Dorsolateral prefrontal cortex (tissue), 120 donors: ENCODE measurements at regions of chr5 and their contacts with region 1.

Region 1: GRCh38 chr5:172283020-172283861 is at the start of gene UBTD2:
- DNase-seq: peak; percentile 28 to 84 (median 66)
- H3K4me3 ChIP-seq: peak within 1 kb of the TSS; percentile 60 to 96 (median 88)
- H3K27ac ChIP-seq: peak within 1 kb of the TSS in 56 of 59 donors; percentile 32 to 91 (median 76)
- H3K27me3 ChIP-seq: no peaks in the 10 kb centered on the region
- CTCF ChIP-seq: peak in 50 of 56 donors; percentile 2 to 72 (median 46)
- total RNA-seq, gene UBTD2: 7.7 to 14.5 (median 9.9) TPM

Region 2: GRCh38 chr5:171387345-171387969 is 895.8 kb before region 1 on chr5 and contains the start of gene NPM1:
- intact Hi-C with region 1: loop called in 1 of 2 experiments (anchors 10 kb)
- DNase-seq: peak; percentile 88 to 98 (median 94)
- H3K4me3 ChIP-seq: peak within 1 kb of the TSS; percentile 71 to 99 (median 93)
- H3K27ac ChIP-seq: peak within 1 kb of the TSS; percentile 52 to 96 (median 87)
- H3K27me3 ChIP-seq: no peaks in the 10 kb centered on the region
- CTCF ChIP-seq: peak in 8 of 56 donors; percentile 10 to 24 (median 16)
- total RNA-seq, gene NPM1: 162 to 384 (median 296) TPM

Region 3: DNA sequence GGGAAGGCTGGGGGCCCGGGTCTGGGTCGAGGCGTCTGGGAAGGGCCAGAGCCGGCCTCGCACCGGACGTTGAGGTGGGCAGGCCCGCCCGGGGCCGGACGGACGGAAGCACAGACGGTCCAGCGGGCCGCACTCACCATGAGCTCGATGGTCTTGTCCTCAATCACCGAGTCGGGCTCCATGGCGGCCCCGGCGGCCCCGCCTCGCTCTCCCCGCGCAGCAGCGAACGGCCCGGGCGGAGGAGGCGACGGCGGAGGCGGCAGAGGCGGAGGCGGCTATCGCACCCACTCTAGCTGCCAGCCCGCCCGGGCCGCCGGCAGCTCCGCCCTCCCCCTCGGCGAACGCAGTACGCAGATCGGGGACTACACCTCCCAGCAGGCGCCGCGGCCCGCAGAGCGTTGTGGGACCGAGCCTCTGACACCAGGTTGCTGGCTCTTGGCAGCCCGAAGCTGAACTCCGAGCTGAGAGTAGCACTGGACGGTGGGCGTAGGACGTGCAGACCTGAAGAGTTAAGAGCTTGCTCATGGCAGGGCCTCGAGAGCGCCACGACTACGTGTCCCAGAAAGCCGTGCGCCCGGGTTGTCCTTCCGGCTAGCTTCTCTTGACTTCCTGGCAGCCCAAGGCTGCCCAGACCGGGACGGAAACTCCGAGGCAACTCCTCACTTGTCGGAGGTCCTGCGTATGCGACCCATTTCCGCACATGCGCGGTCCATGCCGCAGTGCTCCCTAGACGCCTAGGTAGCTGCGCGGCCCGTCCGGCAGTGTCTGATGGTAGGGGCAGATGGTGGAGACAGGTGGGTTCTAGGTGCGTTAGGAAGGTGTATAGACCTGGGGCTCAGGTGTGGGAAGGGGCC is 276.7 kb before region 1 on chr5 and contains the start of gene FBXW11:
- intact Hi-C with region 1: loop called (anchors 5 kb)
- DNase-seq: peak; percentile 95 to 98 (median 98)
- H3K4me3 ChIP-seq: peak within 1 kb of the TSS; percentile 72 to 100 (median 96)
- H3K27ac ChIP-seq: peak within 1 kb of the TSS; percentile 89 to 100 (median 98)
- H3K27me3 ChIP-seq: no peaks in the 10 kb centered on the region
- CTCF ChIP-seq: peak in 21 of 56 donors; percentile 5 to 53 (median 25)
- total RNA-seq, gene FBXW11: 88.4 to 136 (median 113) TPM

Region 4: GRCh38 chr5:172188033-172188892 is 95.0 kb before region 1 on chr5 and contains the start of gene STK10:
- intact Hi-C with region 1: loop called (anchors 2 kb)
- DNase-seq: peak; percentile 78 to 94 (median 86)
- H3K4me3 ChIP-seq: peak within 1 kb of the TSS; percentile 68 to 98 (median 91)
- H3K27ac ChIP-seq: peak within 1 kb of the TSS; percentile 29 to 94 (median 85)
- H3K27me3 ChIP-seq: no peaks in the 10 kb centered on the region
- CTCF ChIP-seq: peak; percentile 44 to 97 (median 89)
- total RNA-seq, gene STK10: 4.5 to 28.7 (median 16.7) TPM

Region 5: GRCh38 chr5:172454358-172455086 is 171.3 kb after region 1 on chr5 and contains the start of gene SH3PXD2B:
- intact Hi-C with region 1: loop called (anchors 5 to 10 kb)
- DNase-seq: peak in 6 of 10 donors; percentile 46 to 79 (median 62)
- H3K4me3 ChIP-seq: peak within 1 kb of the TSS; percentile 61 to 94 (median 79)
- H3K27ac ChIP-seq: peak within 1 kb of the TSS; percentile 29 to 95 (median 86)
- H3K27me3 ChIP-seq: no peaks in the 10 kb centered on the region
- CTCF ChIP-seq: no peak
- total RNA-seq, gene SH3PXD2B: 9.2 to 63.2 (median 19.7) TPM